A549 (cell line): ENCODE measurements at regions of chr9 and their contacts with region 1.

Region 1: DNA sequence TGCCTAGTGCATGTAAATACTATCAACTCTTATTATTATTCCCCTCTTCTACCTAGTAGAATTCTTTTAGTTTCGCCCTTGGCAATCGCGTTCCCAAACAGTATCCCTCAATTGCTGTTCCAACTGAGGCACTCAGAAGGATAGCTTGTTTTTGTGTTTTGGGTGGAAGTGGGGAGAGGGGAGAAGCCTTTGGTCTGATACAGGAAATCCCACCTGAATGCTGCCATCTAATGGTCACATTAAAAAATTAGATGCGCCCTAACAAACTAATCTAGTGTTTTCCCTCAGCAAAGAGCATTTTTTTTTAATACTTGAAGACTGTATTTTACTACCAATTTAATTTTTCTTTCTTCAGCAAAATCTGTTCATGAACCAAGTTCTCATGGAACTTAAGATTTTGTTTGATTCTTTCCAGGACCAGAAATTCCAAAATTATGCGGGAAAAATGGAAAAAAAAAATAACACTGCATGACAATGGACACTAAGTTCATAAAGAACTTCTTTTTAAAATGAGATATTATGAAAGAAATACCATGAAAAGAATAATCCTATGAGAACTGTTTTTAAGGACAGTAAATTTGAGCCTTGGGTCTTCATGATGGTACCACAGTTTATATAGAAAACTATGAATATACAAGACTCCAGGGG is 22.2 kb upstream of the GLDC start:
- DNase-seq: peak; percentile 53 to 73
- ATAC-seq: peak in 1 of 2 experiments; percentile 51; a peak in 2 of 6 replicates
- H3K4me3 ChIP-seq: no peak overlapping the region
- H3K27ac ChIP-seq: peak overlapping the region; percentile 11 to 84; a peak in 3 of 6 replicates
- H3K4me1 ChIP-seq: peaks cover 46% of the 10 kb centered on the region
- CTCF ChIP-seq: peak; percentile 87
- EP300 ChIP-seq: no peak
- POLR2A ChIP-seq: no peak
- RAD21 ChIP-seq: peak; percentile 78 to 80

Region 2: DNA sequence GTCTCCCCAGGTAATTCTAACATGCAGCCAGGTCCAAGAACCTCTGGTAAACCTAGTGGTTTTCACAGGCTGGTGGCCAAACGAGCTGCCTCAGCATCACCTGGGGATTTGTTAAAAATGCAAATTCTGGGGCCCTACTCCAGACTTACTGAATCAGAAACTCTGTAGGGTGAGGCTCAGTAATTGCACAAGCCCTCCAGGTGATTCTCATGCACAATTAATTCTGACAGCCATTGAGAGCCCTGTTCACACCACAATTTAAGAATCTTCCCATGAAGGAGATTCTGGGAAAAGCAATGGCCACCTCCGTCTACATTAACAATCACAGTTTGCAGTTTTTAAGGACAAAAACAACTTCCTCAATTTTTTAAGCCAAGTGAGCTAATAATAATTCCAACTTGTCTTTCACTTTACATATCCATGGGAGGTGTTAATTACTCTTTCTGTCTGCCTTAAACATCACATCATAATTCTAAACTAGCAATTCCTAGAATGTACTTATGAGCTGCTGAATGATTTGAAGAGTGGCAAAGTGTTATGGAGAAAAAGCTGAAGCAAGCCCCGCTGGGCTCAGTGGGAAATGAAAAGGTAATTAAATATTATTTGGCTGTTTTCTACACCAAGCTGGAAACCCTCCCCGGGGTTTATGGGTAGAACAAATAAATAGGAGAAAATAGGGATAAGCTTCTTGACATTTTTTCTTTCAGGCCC is 92.3 kb before region 1 on chr9:
- CTCF ChIA-PET with region 1: interaction called, 11 read pairs
- POLR2A ChIA-PET with region 1: no interaction called
- DNase-seq: no peak
- ATAC-seq: no peak
- H3K4me3 ChIP-seq: no peak overlapping the region
- H3K27ac ChIP-seq: no peak overlapping the region
- H3K4me1 ChIP-seq: no peaks in the 10 kb centered on the region
- CTCF ChIP-seq: no peak
- EP300 ChIP-seq: no peak
- POLR2A ChIP-seq: no peak
- RAD21 ChIP-seq: no peak

Region 3: DNA sequence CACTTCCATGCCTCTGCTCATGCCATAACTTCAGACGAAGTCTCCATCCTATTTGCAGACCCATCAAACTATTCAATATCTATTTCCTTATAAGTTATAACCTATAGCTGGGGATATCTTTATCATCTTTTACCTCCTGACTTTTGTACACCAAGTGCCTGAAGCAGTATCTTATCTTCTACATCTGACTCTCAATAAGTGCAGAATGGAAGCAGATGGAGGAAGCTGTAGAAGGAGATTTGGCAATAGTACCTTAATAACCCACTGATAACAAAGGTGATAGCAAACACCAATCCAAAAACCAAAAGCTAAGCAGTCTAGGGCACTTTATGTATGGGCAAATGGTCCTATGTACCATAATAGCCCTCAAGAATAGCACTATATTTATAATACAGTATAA is 32.7 kb before region 1 on chr9:
- CTCF ChIA-PET with region 1: interaction called, 14 read pairs
- POLR2A ChIA-PET with region 1: no interaction called
- DNase-seq: no peak
- ATAC-seq: no peak
- H3K4me3 ChIP-seq: no peak overlapping the region
- H3K27ac ChIP-seq: no peak overlapping the region
- H3K4me1 ChIP-seq: no peaks in the 10 kb centered on the region
- CTCF ChIP-seq: no peak
- EP300 ChIP-seq: no peak
- POLR2A ChIP-seq: no peak
- RAD21 ChIP-seq: no peak

Region 4: DNA sequence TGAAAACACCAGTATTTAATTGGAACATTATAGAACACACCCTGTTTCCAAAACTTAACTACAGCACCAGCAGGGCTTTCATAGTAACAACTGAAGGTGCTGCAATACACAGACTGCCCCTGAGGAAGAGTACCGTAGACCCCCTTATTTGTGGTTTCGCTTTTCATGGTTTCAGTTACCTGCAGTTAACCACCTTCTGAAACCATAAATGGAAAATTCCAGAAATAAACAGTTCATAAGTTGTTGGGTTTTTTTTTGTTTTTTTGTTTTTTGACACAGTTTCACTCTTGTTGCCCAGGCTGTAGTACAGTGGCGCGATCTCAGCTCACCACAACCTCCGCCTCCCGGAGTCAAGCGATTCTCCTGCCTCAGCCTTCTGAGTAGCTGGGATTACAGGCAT is 12.7 kb before region 1 on chr9:
- CTCF ChIA-PET with region 1: interaction called, 22 read pairs
- POLR2A ChIA-PET with region 1: no interaction called
- DNase-seq: no peak
- ATAC-seq: no peak
- H3K4me3 ChIP-seq: no peak overlapping the region
- H3K27ac ChIP-seq: no peak overlapping the region
- H3K4me1 ChIP-seq: peaks cover 17% of the 10 kb centered on the region
- CTCF ChIP-seq: no peak
- EP300 ChIP-seq: no peak
- POLR2A ChIP-seq: no peak
- RAD21 ChIP-seq: no peak

Region 5: GRCh38 chr9:6723881-6724420 is 56.2 kb after region 1 on chr9:
- CTCF ChIA-PET with region 1: no interaction called
- POLR2A ChIA-PET with region 1: no interaction called
- DNase-seq: no peak
- ATAC-seq: peak in 1 of 2 experiments; percentile 39; a peak in 3 of 6 replicates
- H3K4me3 ChIP-seq: no peak overlapping the region
- H3K27ac ChIP-seq: no peak overlapping the region
- H3K4me1 ChIP-seq: no peaks in the 10 kb centered on the region
- CTCF ChIP-seq: no peak
- EP300 ChIP-seq: no peak
- POLR2A ChIP-seq: no peak
- RAD21 ChIP-seq: no peak